Cardiac septum (tissue), 1 donor: ENCODE measurements at regions of chrX and their contacts with region 1.

Region 1: GRCh38 chrX:119118780-119119395 is 8.7 kb downstream of the KIAA1210 start:
- DNase-seq: no peak

Region 2: DNA sequence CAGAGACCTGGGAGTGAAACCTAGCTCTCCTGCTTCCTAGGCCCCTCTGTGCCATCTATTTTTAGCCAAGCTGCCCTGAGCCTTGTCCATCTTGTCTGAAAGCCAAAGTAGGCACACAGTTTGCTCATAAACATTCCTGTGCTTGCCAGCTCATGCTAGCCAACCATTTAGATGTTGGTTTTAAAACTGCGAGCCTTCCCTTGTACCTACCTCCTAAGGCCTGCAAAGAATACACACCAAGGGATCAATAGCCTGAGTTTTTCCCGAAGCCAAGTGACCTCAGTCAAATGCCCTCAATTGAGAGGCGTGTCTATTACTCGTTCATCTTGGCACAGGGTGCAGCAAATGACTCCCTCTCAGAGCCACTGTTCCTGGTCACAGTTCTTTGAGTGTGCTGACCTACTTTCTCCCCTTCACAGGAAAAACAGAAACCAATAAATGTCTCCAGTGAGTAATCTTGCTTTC is 246.8 kb before region 1 on chrX:
- intact Hi-C with region 1: no loop called
- DNase-seq: peak; percentile 57

Region 3: GRCh38 chrX:119072744-119073143 is 46.1 kb before region 1 on chrX and contains the start of gene CT47C1:
- intact Hi-C with region 1: no loop called
- DNase-seq: no peak
- total RNA-seq, gene CT47C1: not detected

Region 4: DNA sequence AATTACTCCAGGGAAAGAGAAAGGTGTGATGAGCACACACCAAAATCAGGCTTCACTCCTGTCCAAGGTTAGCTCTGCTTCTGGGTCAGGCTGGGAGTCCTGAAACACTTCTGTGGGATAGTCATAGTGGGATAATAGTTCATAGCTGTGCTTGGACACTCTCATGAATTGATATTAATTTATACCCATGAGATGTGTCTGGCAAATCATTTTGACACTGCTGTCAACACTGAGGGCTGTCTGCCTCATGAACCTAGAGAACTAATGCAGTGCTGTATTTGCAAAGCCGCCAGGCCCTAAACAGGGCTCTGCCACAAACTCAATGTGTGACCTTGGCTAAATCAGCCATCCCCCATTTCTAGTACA is 92.7 kb after region 1 on chrX:
- intact Hi-C with region 1: loop called (anchors 5 kb)
- DNase-seq: no peak